ENCODE measurements at regions of chr11 and their contacts with region 1.

Region 1: DNA sequence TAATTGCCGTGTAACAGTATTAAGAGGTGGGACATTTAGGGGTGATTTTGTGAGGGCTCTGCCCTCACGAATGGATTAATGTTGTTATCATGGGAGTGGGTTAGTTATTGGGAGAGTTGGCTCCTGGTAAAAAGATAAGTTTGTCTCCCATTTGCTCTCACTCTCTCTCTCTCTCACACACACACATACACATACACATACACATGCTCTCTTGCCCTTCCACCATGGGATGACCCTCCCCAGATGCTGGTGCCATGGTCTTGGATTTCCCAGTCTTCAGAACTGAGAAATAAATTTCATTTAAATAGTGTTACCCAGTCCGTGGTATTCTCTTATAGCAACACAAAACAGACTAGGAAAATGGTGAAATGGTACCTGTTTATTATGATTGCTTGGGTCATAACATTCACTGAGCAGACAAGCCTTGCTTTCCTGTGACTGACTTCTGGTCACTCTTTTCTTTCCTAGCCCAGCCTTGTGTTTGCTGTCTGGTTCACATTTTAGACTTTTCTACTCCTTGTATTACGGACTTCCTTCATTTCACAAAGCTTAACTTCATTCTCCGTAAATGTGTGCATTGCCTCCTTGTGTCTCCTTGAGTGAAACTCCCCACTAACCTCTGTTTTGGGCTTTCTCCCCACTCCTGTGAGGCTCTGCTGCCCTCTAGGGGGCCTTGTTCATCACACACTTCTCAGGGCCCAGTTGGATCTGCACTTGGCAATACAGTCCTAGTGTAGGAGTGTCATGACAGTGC is 206.5 kb upstream of the CTSC start:
- DNase-seq: peak; percentile 72
- H3K4me3 Mint-ChIP-seq: no peak overlapping the region
- H3K27ac Mint-ChIP-seq: peak overlapping the region; percentile 3
- H3K4me1 Mint-ChIP-seq: peaks cover 7% of the 10 kb centered on the region
- H3K27me3 Mint-ChIP-seq: peaks cover 10% of the 10 kb centered on the region

Region 2: DNA sequence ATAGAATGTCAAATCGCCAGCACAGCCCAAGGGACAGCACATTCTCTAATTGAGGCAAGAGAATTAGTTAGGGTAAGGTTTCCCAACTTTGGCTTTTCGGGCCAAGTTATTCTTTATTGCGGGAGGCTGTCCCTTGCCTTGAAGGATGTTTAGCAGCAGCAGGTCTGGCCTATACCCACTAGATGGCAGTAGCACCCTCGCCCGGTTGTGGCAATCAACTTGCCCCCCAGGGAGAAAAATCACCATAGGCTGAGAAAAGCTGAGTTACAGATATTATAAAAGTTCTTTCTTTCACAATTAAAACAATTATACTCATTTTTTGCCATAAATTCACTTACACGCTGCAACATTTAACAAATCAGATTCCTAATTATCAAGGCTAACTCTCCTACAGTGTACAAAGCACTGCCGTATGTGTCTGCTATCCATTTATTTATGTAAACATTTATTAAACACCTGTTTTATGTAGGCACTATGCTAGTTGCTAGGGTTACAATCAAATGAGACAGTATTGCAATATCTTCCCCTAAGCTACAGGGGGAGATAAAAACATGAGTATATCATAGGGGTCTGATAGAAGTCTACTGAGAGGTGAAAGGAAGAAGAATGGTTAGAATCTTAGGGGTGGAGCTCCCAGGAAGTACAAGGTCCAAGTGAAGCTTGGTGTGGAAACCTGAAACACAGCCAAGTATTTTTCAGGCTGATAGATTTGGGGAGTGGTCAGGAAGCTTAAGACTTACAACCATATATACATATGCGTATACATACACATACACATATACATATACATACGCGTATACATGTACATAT is 821.1 kb before region 1 on chr11:
- intact Hi-C with region 1: loop called (anchors 1 kb)
- DNase-seq: no peak
- H3K4me3 Mint-ChIP-seq: no peak overlapping the region
- H3K27ac Mint-ChIP-seq: no peak overlapping the region
- H3K4me1 Mint-ChIP-seq: no peaks in the 10 kb centered on the region
- H3K27me3 Mint-ChIP-seq: no peaks in the 10 kb centered on the region

Region 3: DNA sequence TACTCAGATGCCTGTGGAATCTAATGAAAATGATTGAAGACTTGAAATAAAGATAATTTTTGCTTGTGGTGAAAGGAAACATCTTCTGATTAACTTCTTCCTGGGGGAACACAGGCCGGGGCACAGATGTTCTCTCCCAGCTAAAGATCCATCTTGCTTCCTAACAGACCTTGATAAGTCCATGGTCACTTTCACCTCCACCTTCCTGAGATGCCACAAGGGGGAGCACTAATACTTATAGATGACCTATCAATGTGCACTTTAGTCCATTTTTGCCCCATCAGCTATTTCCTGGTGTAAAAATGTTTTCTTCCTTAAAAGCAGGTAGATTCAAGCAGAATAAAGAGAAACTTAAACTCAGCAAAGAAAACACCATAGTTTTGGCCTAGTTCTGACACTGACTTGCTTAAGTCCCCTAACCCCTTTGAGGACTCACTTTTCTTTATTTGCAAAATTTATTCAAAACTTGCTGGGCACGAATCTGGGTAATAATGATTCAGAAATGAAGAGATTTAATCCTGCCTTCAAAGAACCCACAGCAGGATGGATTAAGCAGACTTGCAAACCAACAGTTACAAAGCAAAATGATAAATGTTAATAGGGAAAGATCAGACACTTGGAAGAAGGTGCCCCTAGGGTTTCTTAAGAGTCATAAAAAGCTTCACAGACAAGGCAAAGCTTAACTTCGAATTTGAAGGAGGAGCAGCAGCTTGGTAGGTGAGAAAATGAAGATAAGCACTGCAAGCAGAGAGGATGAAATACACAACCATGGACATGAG is 527.5 kb before region 1 on chr11:
- intact Hi-C with region 1: loop called (anchors 1 kb)
- DNase-seq: peak; percentile 29
- H3K4me3 Mint-ChIP-seq: no peak overlapping the region
- H3K27ac Mint-ChIP-seq: no peak overlapping the region
- H3K4me1 Mint-ChIP-seq: no peaks in the 10 kb centered on the region
- H3K27me3 Mint-ChIP-seq: no peaks in the 10 kb centered on the region

Region 4: GRCh38 chr11:88174709-88175568 is 369.1 kb before region 1 on chr11 and contains the start of gene RAB38:
- intact Hi-C with region 1: loop called (anchors 2 kb)
- DNase-seq: peak; percentile 32
- H3K4me3 Mint-ChIP-seq: peak within 1 kb of the TSS; percentile 83
- H3K27ac Mint-ChIP-seq: peak within 1 kb of the TSS; percentile 73
- H3K4me1 Mint-ChIP-seq: peaks cover 52% of the 10 kb centered on the region
- H3K27me3 Mint-ChIP-seq: no peaks in the 10 kb centered on the region
- total RNA-seq, gene RAB38: 2.0 and 2.8 TPM in 2 replicates

Region 5: GRCh38 chr11:88484873-88485621 is 59.0 kb before region 1 on chr11:
- intact Hi-C with region 1: loop called (anchors 2 kb)
- DNase-seq: no peak
- H3K4me3 Mint-ChIP-seq: no peak overlapping the region
- H3K27ac Mint-ChIP-seq: no peak overlapping the region
- H3K4me1 Mint-ChIP-seq: peaks cover 13% of the 10 kb centered on the region
- H3K27me3 Mint-ChIP-seq: no peaks in the 10 kb centered on the region

Region 6: GRCh38 chr11:88523379-88524071 is 20.6 kb before region 1 on chr11:
- intact Hi-C with region 1: no loop called
- DNase-seq: no peak
- H3K4me3 Mint-ChIP-seq: no peak overlapping the region
- H3K27ac Mint-ChIP-seq: no peak overlapping the region
- H3K4me1 Mint-ChIP-seq: no peaks in the 10 kb centered on the region
- H3K27me3 Mint-ChIP-seq: peaks cover 7% of the 10 kb centered on the region